CD4-positive, alpha-beta memory T cell (primary cell): ENCODE measurements at regions of chr12 and their contacts with region 1.

Region 1: DNA sequence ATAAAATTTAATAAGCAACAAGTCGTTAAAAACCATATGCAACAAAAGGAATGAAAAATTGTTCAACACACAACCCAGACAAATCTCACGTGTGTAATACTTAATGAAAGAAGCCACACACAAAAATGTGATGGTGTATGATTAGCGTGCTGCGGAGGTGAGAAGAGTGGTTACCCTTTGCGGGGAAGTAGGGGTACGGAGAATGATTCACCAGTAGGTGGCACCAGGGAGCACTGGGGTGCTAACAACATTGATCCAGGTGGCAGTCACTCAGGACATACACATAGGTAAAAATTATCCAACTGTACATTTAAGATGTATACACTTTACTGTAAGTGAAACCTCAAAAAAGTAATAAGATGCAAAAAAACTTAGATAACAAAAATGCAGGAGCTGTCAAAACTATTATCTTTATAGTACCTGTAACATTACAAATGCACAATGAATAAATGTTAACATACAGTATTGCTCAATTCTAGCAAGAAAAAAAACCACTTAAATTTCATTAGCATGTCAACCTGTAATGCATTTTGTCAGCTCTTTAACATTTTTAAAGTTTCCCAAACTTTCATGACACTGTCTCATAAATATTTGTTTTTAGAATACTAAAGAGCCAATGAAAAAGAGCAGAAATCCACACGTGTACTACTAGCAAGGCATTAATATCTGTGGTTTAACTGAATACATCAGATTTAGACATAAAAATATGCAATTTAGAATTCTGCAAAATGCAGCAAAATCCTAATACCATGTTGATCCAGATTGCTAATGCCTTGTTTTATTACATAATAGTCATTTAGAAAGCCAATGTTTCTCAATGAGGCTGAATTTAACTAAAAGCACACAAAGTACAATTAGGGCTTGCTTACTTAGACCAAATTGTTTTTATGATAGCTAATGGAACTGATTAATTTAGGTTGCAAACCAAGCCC is 46.7 kb downstream of the TMCC3 start:
- DNase-seq: peak; percentile 37 to 58 (median 41)
- H3K4me3 ChIP-seq: no peak overlapping the region
- H3K4me3 Mint-ChIP-seq: no peak overlapping the region
- H3K27ac ChIP-seq: no peak overlapping the region
- H3K27ac Mint-ChIP-seq: no peak overlapping the region
- H3K4me1 ChIP-seq: no peaks in the 10 kb centered on the region
- H3K4me1 Mint-ChIP-seq: peaks cover 0 to 2% (median 0%) of the 10 kb centered on the region in 4 donors
- H3K27me3 ChIP-seq: no peaks in the 10 kb centered on the region
- H3K27me3 Mint-ChIP-seq: peaks cover 9% of the 10 kb centered on the region in 2 donors

Region 2: GRCh38 chr12:94621664-94622359 is 18.1 kb after region 1 on chr12:
- CTCF ChIA-PET with region 1: interaction called, 12 read pairs
- POLR2A ChIA-PET with region 1: no interaction called
- intact Hi-C with region 1: no loop called
- DNase-seq: peak; percentile 29 to 51 (median 35)
- H3K4me3 ChIP-seq: peak overlapping the region in 1 of 2 donors; percentile 7
- H3K4me3 Mint-ChIP-seq: peak overlapping the region; percentile 73 to 90 (median 82)
- H3K27ac ChIP-seq: no peak overlapping the region
- H3K27ac Mint-ChIP-seq: peak overlapping the region; percentile 17 to 92 (median 88)
- H3K4me1 ChIP-seq: peaks cover 7% of the 10 kb centered on the region
- H3K4me1 Mint-ChIP-seq: peaks cover 14 to 27% (median 21%) of the 10 kb centered on the region in 4 donors
- H3K27me3 ChIP-seq: no peaks in the 10 kb centered on the region
- H3K27me3 Mint-ChIP-seq: no peaks in the 10 kb centered on the region

Region 3: GRCh38 chr12:94649349-94650142 is 45.8 kb after region 1 on chr12:
- CTCF ChIA-PET with region 1: no interaction called
- POLR2A ChIA-PET with region 1: no interaction called
- intact Hi-C with region 1: loop called (anchors 1 kb)
- DNase-seq: peak in 4 of 5 donors; percentile 21 to 36 (median 30)
- H3K4me3 ChIP-seq: peak overlapping the region in 1 of 2 donors; percentile 16
- H3K4me3 Mint-ChIP-seq: peak overlapping the region; percentile 60 to 86 (median 80)
- H3K27ac ChIP-seq: no peak overlapping the region
- H3K27ac Mint-ChIP-seq: peak overlapping the region in 1 of 7 donors; percentile 63
- H3K4me1 ChIP-seq: no peaks in the 10 kb centered on the region
- H3K4me1 Mint-ChIP-seq: peaks cover 4 to 30% (median 13%) of the 10 kb centered on the region in 4 donors
- H3K27me3 ChIP-seq: peaks cover 13% of the 10 kb centered on the region
- H3K27me3 Mint-ChIP-seq: peaks cover 34 to 46% of the 10 kb centered on the region in 2 donors

Region 4: DNA sequence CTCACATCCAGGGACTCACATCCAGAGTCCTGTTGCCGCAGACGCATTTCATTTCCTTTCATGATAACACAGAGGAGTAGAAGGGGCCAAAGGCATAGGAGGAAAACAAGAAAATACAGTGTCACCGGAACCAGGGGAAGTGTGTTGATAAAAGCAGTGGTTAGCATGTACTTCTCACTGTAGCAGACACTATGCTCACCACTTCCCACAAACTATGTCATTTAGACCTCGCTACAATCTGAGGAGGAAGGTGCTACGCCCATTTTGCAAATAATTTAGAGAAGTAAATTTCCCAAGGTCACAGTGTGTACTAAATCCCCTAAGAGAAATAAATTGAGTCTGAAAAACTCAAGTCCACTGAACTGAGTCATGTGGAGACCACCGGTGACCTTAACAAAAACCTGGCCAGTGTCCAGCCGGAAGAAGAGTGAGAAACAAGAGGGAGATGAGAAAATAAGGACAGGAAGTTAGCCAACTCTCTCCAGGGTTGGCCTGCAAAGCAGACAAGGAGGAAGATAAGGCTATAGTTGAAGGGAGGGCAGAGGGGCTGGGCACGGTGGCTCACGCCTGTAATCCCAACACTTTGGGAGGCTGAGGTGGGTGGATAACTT is 72.4 kb after region 1 on chr12:
- CTCF ChIA-PET with region 1: no interaction called
- POLR2A ChIA-PET with region 1: no interaction called
- intact Hi-C with region 1: no loop called
- DNase-seq: peak; percentile 37 to 59 (median 49)
- H3K4me3 ChIP-seq: no peak overlapping the region
- H3K4me3 Mint-ChIP-seq: peak overlapping the region; percentile 23 to 82 (median 57)
- H3K27ac ChIP-seq: no peak overlapping the region
- H3K27ac Mint-ChIP-seq: peak overlapping the region; percentile 25 to 93 (median 87)
- H3K4me1 ChIP-seq: peaks cover 21% of the 10 kb centered on the region
- H3K4me1 Mint-ChIP-seq: peaks cover 12 to 26% (median 19%) of the 10 kb centered on the region in 4 donors
- H3K27me3 ChIP-seq: no peaks in the 10 kb centered on the region
- H3K27me3 Mint-ChIP-seq: peaks cover 5 to 8% of the 10 kb centered on the region in 2 donors